CD4-positive, alpha-beta memory T cell (primary cell): ENCODE measurements at regions of chr4 and their contacts with region 1.

Region 1: GRCh38 chr4:54322818-54323417 is 93.8 kb downstream of the PDGFRA start:
- DNase-seq: peak in 4 of 5 donors; percentile 26 to 40 (median 36)
- H3K4me3 ChIP-seq: no peak overlapping the region
- H3K4me3 Mint-ChIP-seq: no peak overlapping the region
- H3K27ac ChIP-seq: no peak overlapping the region
- H3K27ac Mint-ChIP-seq: peak overlapping the region in 1 of 7 donors; percentile 53
- H3K4me1 ChIP-seq: no peaks in the 10 kb centered on the region
- H3K4me1 Mint-ChIP-seq: no peaks in the 10 kb centered on the region
- H3K27me3 ChIP-seq: no peaks in the 10 kb centered on the region
- H3K27me3 Mint-ChIP-seq: peaks cover 0 to 3% of the 10 kb centered on the region in 2 donors

Region 2: DNA sequence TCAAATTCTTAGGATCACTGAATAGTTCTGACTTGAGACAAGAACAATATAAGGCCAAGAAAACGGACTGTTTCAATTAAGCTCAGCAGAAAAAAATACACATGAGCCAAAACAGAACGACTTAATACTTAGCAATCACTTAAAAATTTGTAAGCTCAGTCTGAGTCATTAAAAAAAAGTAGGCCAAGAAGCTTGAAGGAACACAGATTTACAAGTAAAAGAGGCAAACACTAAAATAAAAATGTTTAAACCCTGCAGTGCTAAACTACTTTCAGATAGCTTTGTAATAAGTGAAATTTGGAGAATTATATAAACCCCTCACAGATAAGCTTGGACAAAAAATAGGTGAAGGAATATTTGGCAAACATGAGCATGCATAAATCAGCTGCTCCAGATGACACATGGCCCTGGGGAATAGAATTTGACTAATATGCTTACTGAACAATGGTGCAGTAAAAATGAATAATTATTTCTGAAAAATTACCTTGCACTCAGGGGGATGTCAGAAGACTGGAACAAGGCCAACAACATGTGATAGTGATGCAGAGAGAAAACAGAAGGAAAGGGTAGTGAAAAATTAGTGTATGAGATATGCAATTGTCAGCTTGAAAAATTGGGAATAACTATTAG is 781.2 kb before region 1 on chr4:
- CTCF ChIA-PET with region 1: no interaction called
- POLR2A ChIA-PET with region 1: no interaction called
- intact Hi-C with region 1: no loop called
- DNase-seq: no peak
- H3K4me3 ChIP-seq: no peak overlapping the region
- H3K4me3 Mint-ChIP-seq: no peak overlapping the region
- H3K27ac ChIP-seq: no peak overlapping the region
- H3K27ac Mint-ChIP-seq: no peak overlapping the region
- H3K4me1 ChIP-seq: no peaks in the 10 kb centered on the region
- H3K4me1 Mint-ChIP-seq: no peaks in the 10 kb centered on the region
- H3K27me3 ChIP-seq: peaks cover 4% of the 10 kb centered on the region
- H3K27me3 Mint-ChIP-seq: peaks cover 6 to 22% of the 10 kb centered on the region in 2 donors

Region 3: DNA sequence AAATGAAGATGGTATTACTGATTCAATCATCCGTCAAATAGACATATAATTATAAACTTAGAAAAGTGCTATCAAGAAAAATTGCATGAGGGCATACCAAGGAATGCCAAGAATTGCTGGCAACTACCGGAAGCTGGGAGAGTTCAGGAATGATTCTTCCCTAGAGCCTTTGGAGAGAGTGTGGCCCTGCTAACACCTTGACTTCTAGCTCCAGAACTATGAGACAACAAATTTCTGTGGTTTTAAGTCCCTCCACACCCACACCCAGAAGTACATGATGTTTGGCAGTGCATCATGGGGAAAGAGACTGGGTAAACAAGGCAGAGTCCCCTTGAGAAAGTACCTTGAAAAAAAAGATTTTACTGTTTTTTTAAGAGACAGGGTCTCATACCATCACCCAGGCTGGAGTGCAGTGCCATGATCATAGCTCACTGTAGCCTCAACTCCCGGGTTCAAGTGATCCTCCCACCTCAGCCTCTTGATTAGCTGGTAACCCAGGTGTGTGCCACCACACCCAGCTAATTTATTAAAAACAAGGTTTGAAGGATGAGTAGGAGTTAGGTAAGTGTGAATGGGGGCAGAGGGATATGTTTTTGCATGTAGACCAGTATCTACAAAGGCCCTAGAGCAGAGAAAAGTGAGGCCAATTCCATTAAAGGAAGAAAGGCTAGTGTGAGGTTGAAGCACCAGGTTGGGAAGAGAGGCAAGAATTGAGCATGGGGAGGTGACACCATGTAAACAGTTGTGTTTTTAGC is 169.9 kb before region 1 on chr4:
- CTCF ChIA-PET with region 1: no interaction called
- POLR2A ChIA-PET with region 1: no interaction called
- intact Hi-C with region 1: no loop called
- DNase-seq: no peak
- H3K4me3 ChIP-seq: no peak overlapping the region
- H3K4me3 Mint-ChIP-seq: no peak overlapping the region
- H3K27ac ChIP-seq: no peak overlapping the region
- H3K27ac Mint-ChIP-seq: no peak overlapping the region
- H3K4me1 ChIP-seq: no peaks in the 10 kb centered on the region
- H3K4me1 Mint-ChIP-seq: peaks cover 0 to 4% (median 0%) of the 10 kb centered on the region in 4 donors
- H3K27me3 ChIP-seq: no peaks in the 10 kb centered on the region
- H3K27me3 Mint-ChIP-seq: peaks cover 12 to 22% of the 10 kb centered on the region in 2 donors

Region 4: GRCh38 chr4:54337009-54337408 is 14.1 kb after region 1 on chr4:
- CTCF ChIA-PET with region 1: no interaction called
- POLR2A ChIA-PET with region 1: no interaction called
- intact Hi-C with region 1: no loop called
- DNase-seq: no peak
- H3K4me3 ChIP-seq: no peak overlapping the region
- H3K4me3 Mint-ChIP-seq: no peak overlapping the region
- H3K27ac ChIP-seq: no peak overlapping the region
- H3K27ac Mint-ChIP-seq: no peak overlapping the region
- H3K4me1 ChIP-seq: no peaks in the 10 kb centered on the region
- H3K4me1 Mint-ChIP-seq: no peaks in the 10 kb centered on the region
- H3K27me3 ChIP-seq: no peaks in the 10 kb centered on the region
- H3K27me3 Mint-ChIP-seq: peaks cover 0 to 7% of the 10 kb centered on the region in 2 donors

Region 5: GRCh38 chr4:54440394-54441136 is 117.6 kb after region 1 on chr4:
- CTCF ChIA-PET with region 1: no interaction called
- POLR2A ChIA-PET with region 1: no interaction called
- intact Hi-C with region 1: loop called (anchors 2 kb)
- DNase-seq: no peak
- H3K4me3 ChIP-seq: no peak overlapping the region
- H3K4me3 Mint-ChIP-seq: no peak overlapping the region
- H3K27ac ChIP-seq: no peak overlapping the region
- H3K27ac Mint-ChIP-seq: no peak overlapping the region
- H3K4me1 ChIP-seq: no peaks in the 10 kb centered on the region
- H3K4me1 Mint-ChIP-seq: no peaks in the 10 kb centered on the region
- H3K27me3 ChIP-seq: no peaks in the 10 kb centered on the region
- H3K27me3 Mint-ChIP-seq: peaks cover 1 to 12% of the 10 kb centered on the region in 2 donors

Region 6: GRCh38 chr4:54596201-54596600 is 273.3 kb after region 1 on chr4:
- CTCF ChIA-PET with region 1: no interaction called
- POLR2A ChIA-PET with region 1: no interaction called
- intact Hi-C with region 1: no loop called
- DNase-seq: no peak
- H3K4me3 ChIP-seq: no peak overlapping the region
- H3K4me3 Mint-ChIP-seq: no peak overlapping the region
- H3K27ac ChIP-seq: no peak overlapping the region
- H3K27ac Mint-ChIP-seq: no peak overlapping the region
- H3K4me1 ChIP-seq: no peaks in the 10 kb centered on the region
- H3K4me1 Mint-ChIP-seq: no peaks in the 10 kb centered on the region
- H3K27me3 ChIP-seq: no peaks in the 10 kb centered on the region
- H3K27me3 Mint-ChIP-seq: peaks cover 1 to 6% of the 10 kb centered on the region in 2 donors

Region 7: DNA sequence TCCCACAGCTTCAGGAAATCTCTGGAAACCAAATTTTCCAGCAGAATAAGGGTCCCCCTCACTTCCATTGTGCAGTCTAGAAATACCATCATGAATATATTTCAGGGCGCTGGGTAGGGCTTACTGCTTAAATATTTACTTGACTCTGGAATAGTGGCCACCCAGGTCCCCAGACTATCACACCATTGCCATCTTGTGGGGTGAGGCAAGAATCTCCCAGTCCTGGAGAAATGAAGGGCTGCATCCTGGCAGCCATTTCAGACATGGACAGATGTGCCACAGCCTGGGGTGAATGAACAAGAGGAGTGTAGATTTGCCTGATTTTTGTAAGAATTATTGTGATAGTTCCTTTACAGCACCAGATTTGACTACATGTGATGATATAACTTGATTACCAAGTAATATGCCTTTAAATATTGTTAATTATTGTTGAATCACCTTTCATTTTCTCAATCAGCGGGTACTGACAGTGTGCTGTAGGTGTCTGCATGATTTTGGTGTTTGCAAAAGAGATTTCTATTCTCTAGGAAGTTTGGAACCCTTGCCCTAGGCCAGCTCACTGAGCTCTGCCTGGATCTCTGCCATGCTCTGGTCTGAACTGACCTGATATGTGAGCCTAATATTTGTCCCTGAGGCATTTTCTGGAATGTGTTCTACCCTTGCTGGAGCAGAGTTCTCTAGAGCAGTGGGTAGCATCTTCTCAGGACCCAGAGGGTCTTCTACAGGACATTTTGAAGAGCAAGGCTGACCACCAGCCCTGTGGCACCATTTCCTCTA is 518.3 kb after region 1 on chr4:
- CTCF ChIA-PET with region 1: no interaction called
- POLR2A ChIA-PET with region 1: no interaction called
- intact Hi-C with region 1: loop called (anchors 2 kb)
- DNase-seq: no peak
- H3K4me3 ChIP-seq: no peak overlapping the region
- H3K4me3 Mint-ChIP-seq: no peak overlapping the region
- H3K27ac ChIP-seq: no peak overlapping the region
- H3K27ac Mint-ChIP-seq: no peak overlapping the region
- H3K4me1 ChIP-seq: no peaks in the 10 kb centered on the region
- H3K4me1 Mint-ChIP-seq: peaks cover 0 to 8% (median 4%) of the 10 kb centered on the region in 4 donors
- H3K27me3 ChIP-seq: no peaks in the 10 kb centered on the region
- H3K27me3 Mint-ChIP-seq: no peaks in the 10 kb centered on the region

Region 8: DNA sequence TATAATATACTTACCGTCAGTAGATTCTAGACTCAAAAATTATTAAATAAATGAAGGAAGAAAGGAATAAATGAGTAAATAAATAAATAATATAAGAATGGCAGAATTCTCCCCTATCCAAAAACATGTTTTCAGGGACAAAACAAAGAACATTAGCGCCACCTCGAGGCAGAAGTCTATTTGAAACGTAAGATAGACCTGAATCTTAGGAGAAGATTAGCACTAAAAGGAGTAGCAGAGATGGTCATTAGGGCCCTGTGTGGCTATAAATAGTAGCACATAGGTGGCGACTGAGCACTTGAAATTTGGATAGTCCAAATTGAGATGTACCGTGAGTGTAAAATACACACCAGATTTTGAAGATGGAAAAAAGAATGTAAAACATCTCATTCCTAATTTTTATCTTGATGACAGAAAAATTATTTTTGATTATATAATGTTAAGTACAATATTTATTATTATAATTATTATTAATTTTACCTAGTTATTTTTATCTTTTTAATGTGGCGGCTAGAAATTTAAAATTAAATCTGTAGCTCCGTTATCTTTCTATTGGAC is 998.9 kb after region 1 on chr4:
- CTCF ChIA-PET with region 1: no interaction called
- POLR2A ChIA-PET with region 1: no interaction called
- intact Hi-C with region 1: loop called (anchors 10 kb)
- DNase-seq: peak in 2 of 5 donors; percentile 18 to 23
- H3K4me3 ChIP-seq: no peak overlapping the region
- H3K4me3 Mint-ChIP-seq: no peak overlapping the region
- H3K27ac ChIP-seq: no peak overlapping the region
- H3K27ac Mint-ChIP-seq: no peak overlapping the region
- H3K4me1 ChIP-seq: peaks cover 15% of the 10 kb centered on the region
- H3K4me1 Mint-ChIP-seq: peaks cover 15 to 23% (median 19%) of the 10 kb centered on the region in 4 donors
- H3K27me3 ChIP-seq: no peaks in the 10 kb centered on the region
- H3K27me3 Mint-ChIP-seq: peaks cover 0 to 2% of the 10 kb centered on the region in 2 donors